Heart right ventricle (tissue), 16 donors: ENCODE measurements at regions of chr14 and their contacts with region 1.

Region 1: GRCh38 chr14:24817212-24818057 is 183.4 kb upstream of the GZMB start:
- DNase-seq: peak in 1 of 2 donors; percentile 61
- ATAC-seq: peak; percentile 48 to 81 (median 70)
- H3K4me3 ChIP-seq: no peak overlapping the region
- H3K27ac ChIP-seq: peak overlapping the region in 9 of 10 donors; percentile 48 to 82 (median 76)
- H3K4me1 ChIP-seq: peaks cover 21 to 57% (median 42%) of the 10 kb centered on the region in 9 donors
- H3K27me3 ChIP-seq: no peaks in the 10 kb centered on the region
- CTCF ChIP-seq: peak in 7 of 9 donors; percentile 22 to 70 (median 47)

Region 2: DNA sequence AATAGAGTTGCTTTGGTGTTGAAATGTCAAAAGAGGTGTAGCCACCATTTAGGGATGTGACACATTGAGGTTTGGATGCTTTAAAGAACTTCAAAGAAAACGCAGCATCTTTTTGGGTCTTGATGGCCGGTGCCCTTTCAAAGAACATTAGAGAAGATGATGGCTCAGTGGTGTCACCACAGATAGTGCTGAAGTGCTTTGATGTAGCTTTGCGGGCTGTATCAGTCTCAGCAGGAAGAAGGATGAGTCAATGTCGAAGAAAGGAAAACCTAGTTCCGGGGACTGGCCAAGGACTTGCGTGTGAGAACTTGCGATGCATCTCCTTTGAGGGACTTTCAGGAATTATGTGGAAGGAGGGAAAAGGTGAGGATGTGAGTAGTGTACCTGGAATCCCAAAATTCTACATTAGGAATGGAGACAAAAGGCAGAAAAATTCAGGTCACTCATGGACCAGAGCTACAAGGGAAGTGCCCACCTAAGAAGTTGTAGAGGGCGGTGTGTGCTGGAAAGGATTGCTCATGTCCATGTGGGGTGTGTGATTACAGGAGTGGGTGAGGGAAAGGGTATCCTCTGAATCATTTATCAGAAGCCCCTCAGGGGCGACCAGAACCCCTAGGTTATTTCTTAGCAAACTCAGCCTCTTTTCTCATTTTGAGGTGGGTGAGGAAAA is 143.8 kb before region 1 on chr14:
- intact Hi-C with region 1: no loop called
- DNase-seq: no peak
- ATAC-seq: no peak
- H3K4me3 ChIP-seq: peak overlapping the region in 1 of 10 donors; percentile 1
- H3K27ac ChIP-seq: peak overlapping the region in 2 of 10 donors; percentile 16 to 69
- H3K4me1 ChIP-seq: peaks cover 0 to 32% (median 3%) of the 10 kb centered on the region in 9 donors
- H3K27me3 ChIP-seq: no peaks in the 10 kb centered on the region
- CTCF ChIP-seq: no peak

Region 3: GRCh38 chr14:24952851-24953666 is 135.6 kb after region 1 on chr14:
- intact Hi-C with region 1: loop called in 2 of 10 experiments (anchors 10 kb)
- DNase-seq: no peak
- ATAC-seq: peak in 4 of 8 donors; percentile 31 to 56 (median 40)
- H3K4me3 ChIP-seq: no peak overlapping the region
- H3K27ac ChIP-seq: peak overlapping the region in 1 of 10 donors; percentile 50
- H3K4me1 ChIP-seq: peaks cover 1 to 49% (median 25%) of the 10 kb centered on the region in 9 donors
- H3K27me3 ChIP-seq: no peaks in the 10 kb centered on the region
- CTCF ChIP-seq: peak in 6 of 9 donors; percentile 13 to 47 (median 26)

Region 4: DNA sequence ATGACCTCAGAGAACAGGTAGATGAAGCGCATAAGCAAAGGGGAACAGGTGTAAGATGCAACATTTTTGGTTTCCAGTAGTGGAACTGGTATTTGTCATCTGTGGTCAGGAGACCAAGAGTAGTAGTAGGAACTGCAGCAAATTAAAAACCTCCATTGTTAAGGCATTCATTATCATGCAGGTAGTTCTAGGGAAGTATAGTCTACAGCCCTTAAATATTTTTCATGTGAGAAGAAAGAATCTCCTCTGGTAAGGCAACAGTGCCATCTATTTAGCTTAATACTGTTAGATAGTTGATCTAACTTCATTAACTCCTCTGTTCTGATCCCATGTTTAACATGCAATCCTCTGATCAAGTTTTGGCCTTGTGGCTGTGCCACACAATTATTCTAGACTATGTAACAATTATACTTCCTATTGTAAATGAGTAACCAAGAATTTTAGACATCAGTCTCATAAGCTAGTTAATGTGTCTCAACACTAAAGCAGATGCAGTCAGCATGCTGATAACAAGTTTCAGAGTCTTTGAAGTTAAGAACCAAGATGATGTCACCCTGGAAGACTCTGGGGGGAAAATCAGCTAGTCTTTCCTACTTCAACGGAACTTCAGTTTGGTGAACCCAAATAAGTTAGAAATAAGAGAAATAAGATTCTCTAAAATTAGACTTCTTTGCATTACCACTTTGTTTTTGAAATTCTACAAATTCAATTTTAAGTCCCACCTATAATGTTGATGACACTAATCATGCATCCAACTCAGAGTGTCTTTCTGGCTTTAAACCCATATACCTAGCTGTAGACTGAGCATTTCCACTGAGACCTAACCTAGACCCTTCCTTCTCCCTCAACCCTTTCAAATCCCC is 161.7 kb after region 1 on chr14:
- intact Hi-C with region 1: no loop called
- DNase-seq: no peak
- ATAC-seq: peak in 1 of 8 donors; percentile 45
- H3K4me3 ChIP-seq: no peak overlapping the region
- H3K27ac ChIP-seq: no peak overlapping the region
- H3K4me1 ChIP-seq: peaks cover 0 to 34% (median 19%) of the 10 kb centered on the region in 9 donors
- H3K27me3 ChIP-seq: no peaks in the 10 kb centered on the region
- CTCF ChIP-seq: no peak

Region 5: GRCh38 chr14:25111061-25111601 is 293.7 kb after region 1 on chr14:
- intact Hi-C with region 1: loop called in 1 of 10 experiments (anchors 5 kb)
- DNase-seq: peak in 1 of 2 donors; percentile 66
- ATAC-seq: peak; percentile 95 to 99 (median 97)
- H3K4me3 ChIP-seq: peak overlapping the region in 6 of 10 donors; percentile 7 to 41 (median 16)
- H3K27ac ChIP-seq: peak overlapping the region; percentile 27 to 81 (median 58)
- H3K4me1 ChIP-seq: peaks cover 6 to 24% (median 14%) of the 10 kb centered on the region in 9 donors
- H3K27me3 ChIP-seq: no peaks in the 10 kb centered on the region
- CTCF ChIP-seq: no peak